ENCODE measurements at regions of chr12 and their contacts with region 1.

Region 1: GRCh38 chr12:18430425-18431048 is 169.2 kb downstream of the PIK3C2G start:
- DNase-seq: peak; percentile 38
- ATAC-seq: peak; percentile 97
- H3K4me3 ChIP-seq: no peak overlapping the region
- H3K27ac ChIP-seq: no peak overlapping the region
- H3K4me1 ChIP-seq: peaks cover 0 to 4% of the 10 kb centered on the region in 2 experiments; a peak in 1 of 4 replicates
- H3K27me3 ChIP-seq: no peaks in the 10 kb centered on the region
- CTCF ChIP-seq: peak; percentile 37 to 87 (median 86); a peak in 5 of 6 replicates
- POLR2A ChIP-seq: no peak
- RAD21 ChIP-seq: peak; percentile 73

Region 2: DNA sequence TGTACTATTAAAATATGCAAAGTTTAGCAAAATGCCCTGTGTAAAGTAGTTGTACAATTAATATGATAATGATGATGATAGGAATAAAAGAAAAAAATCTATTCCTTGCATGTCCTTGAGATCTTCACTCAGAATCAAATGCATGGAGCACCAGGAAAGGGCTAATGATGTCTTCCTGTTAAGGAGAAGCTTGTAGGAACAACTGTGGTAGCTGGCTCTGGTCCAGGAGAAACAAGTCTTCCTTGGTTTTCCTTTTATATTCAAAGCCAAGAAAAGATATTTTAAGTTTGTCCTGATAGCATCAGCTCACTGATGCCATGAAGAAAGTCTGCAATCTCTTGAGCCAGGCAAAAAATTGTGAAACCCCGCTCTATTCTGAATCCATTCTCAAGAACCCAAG is 30.4 kb before region 1 on chr12:
- CTCF ChIA-PET with region 1: no interaction called
- POLR2A ChIA-PET with region 1: no interaction called
- RAD21 ChIA-PET with region 1: no interaction called
- intact Hi-C with region 1: no loop called
- DNase-seq: no peak
- ATAC-seq: no peak
- H3K4me3 ChIP-seq: no peak overlapping the region
- H3K27ac ChIP-seq: no peak overlapping the region
- H3K4me1 ChIP-seq: no peaks in the 10 kb centered on the region
- H3K27me3 ChIP-seq: no peaks in the 10 kb centered on the region
- CTCF ChIP-seq: no peak
- POLR2A ChIP-seq: no peak
- RAD21 ChIP-seq: no peak

Region 3: DNA sequence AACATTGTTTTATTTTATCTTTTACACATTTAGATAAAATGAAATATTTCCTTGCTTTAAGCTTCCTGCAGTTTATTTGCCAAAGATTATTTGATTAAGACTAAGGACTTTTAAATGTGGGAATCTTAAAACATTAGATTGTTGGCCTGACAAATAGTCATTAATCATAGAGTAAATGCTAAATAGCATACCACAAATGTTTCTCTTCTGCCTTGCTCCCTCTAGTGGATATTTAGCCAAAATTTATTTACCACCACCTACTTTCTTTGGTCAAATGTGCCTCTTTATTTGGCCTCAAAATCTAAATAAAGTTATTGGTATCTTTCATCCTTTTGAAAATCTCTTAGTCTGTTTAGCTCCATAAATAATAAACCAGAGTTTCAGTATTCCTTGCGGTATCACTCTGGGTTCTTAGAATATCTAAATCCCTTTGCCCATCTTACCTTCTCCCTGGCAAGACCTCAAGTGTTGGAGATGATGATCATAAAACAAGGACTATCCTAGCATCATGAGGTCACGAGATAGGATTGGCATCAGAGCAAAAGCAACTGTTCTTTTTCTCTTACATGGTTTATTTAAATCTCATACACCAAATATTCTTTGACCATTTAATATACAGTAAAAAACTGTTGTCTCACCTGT is 858.2 kb after region 1 on chr12:
- CTCF ChIA-PET with region 1: no interaction called
- POLR2A ChIA-PET with region 1: no interaction called
- RAD21 ChIA-PET with region 1: no interaction called
- intact Hi-C with region 1: loop called (anchors 5 kb)
- DNase-seq: peak; percentile 22
- ATAC-seq: peak; percentile 59; the same call in 1 of the 2 replicates
- H3K4me3 ChIP-seq: no peak overlapping the region
- H3K27ac ChIP-seq: no peak overlapping the region
- H3K4me1 ChIP-seq: no peaks in the 10 kb centered on the region
- H3K27me3 ChIP-seq: no peaks in the 10 kb centered on the region
- CTCF ChIP-seq: peak; percentile 42 to 75 (median 56); a peak in 5 of 6 replicates
- POLR2A ChIP-seq: no peak
- RAD21 ChIP-seq: peak; percentile 52

Measured in HCT116 (cell line).